Activated CD8-positive, alpha-beta T cell treated with anti-CD3 and anti-CD28 coated beads for 36 hours (primary cell): ENCODE measurements at regions of chr17 and their contacts with region 1.

Region 1: GRCh38 chr17:43878260-43879175 is 28.8 kb downstream of the MPP2 start:
- DNase-seq: peak; percentile 73
- ATAC-seq: peak; percentile 95
- H3K4me3 Mint-ChIP-seq: no peak overlapping the region
- H3K27ac Mint-ChIP-seq: no peak overlapping the region
- H3K4me1 Mint-ChIP-seq: no peaks in the 10 kb centered on the region
- H3K27me3 Mint-ChIP-seq: peaks cover under 1% of the 10 kb centered on the region
- CTCF ChIP-seq: peak; percentile 82

Region 2: GRCh38 chr17:43661699-43662412 is 216.7 kb before region 1 on chr17 and contains the start of gene MEOX1:
- CTCF ChIA-PET with region 1: no interaction called
- POLR2A ChIA-PET with region 1: no interaction called
- intact Hi-C with region 1: no loop called
- DNase-seq: peak; percentile 57
- ATAC-seq: peak; percentile 86
- H3K4me3 Mint-ChIP-seq: peak within 1 kb of the TSS; percentile 31
- H3K27ac Mint-ChIP-seq: peak within 1 kb of the TSS; percentile 39
- H3K4me1 Mint-ChIP-seq: peaks cover 25% of the 10 kb centered on the region
- H3K27me3 Mint-ChIP-seq: peaks cover 7% of the 10 kb centered on the region
- CTCF ChIP-seq: no peak
- total RNA-seq, gene MEOX1: 0.45 to 0.47 TPM

Region 3: DNA sequence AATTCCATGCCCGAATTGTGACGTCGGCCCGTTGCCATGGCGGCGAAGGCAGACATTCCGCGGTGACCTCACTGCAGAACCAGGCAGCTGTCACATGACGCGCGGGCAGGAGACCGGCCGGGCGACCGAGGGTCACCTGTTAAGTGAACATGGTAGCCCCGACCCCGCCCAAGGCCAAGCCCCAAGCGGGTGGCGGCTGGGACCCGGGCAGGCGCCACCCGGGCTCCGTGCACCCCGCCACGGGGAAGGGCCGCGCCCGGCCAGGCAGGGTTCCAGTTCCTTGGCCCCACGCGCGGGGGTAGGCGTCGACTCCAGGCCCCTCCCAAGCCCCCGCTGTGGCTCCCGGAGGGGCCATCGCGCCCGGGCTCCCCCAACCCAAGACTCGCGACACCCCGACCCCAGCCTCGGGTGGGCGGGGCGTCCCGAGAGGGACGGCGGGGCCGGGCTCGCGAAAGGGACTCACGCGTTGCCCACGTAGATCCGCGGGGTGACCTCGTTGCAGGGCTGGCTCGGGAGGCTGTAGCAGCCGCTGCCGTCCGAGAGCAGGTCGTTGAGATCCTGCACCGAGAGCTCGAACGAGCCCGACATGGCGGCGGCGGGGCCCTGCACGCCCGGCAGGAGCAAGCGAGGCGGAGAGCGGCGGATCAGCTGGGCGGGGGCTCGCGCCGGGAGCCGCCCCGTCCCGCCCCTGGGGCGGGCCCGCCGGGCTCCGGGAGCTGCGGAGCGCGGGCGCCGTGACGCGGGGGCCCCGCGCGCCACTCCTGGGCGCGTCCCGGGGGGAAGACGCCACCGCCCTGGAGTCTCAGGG is 100.0 kb before region 1 on chr17 and contains the start of gene DUSP3:
- CTCF ChIA-PET with region 1: no interaction called
- POLR2A ChIA-PET with region 1: no interaction called
- intact Hi-C with region 1: no loop called
- DNase-seq: peak; percentile 72
- ATAC-seq: peak; percentile 97
- H3K4me3 Mint-ChIP-seq: peak within 1 kb of the TSS; percentile 79
- H3K27ac Mint-ChIP-seq: peak within 1 kb of the TSS; percentile 78
- H3K4me1 Mint-ChIP-seq: peaks cover 10% of the 10 kb centered on the region
- H3K27me3 Mint-ChIP-seq: peaks cover 27% of the 10 kb centered on the region
- CTCF ChIP-seq: no peak
- total RNA-seq, gene DUSP3: 24.7 to 26.3 TPM

Region 4: DNA sequence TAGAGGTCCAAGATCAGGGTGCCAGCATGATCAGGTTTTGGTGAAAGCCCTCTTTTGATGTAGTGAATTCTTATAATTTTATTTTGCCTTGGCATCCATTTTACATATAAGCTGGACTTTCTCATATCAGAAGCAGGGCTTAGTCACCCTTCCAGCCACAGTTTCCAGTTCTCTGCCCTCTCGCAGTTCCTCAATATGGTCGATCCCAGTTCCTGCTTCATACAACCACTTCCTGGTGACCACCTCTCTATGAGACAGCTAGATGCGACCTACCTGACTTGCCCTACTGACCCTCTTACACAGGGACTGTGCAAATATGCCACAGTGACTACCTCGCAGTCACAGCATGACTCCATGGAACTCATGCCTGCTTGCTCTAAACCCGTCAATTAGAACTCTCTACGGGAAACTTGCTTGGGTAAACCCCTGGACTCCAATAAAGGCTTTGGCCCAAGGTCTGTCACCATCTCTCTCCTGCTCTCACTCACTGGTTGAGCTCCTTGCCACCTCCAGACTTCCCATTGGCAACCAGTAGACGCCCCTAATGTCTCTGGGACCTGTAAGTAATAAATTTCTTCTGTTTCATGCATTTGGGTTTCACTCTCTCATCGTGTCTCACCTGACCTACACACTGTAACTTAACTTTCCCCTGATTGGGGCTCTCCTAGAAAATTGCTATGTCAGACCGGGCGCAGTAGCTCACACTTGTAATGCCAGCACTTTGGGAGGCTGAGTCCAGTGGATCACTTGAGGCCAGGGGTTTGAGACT is 10.1 kb before region 1 on chr17:
- CTCF ChIA-PET with region 1: interaction called, 15 read pairs
- POLR2A ChIA-PET with region 1: no interaction called
- intact Hi-C with region 1: no loop called
- DNase-seq: no peak
- ATAC-seq: no peak
- H3K4me3 Mint-ChIP-seq: no peak overlapping the region
- H3K27ac Mint-ChIP-seq: no peak overlapping the region
- H3K4me1 Mint-ChIP-seq: no peaks in the 10 kb centered on the region
- H3K27me3 Mint-ChIP-seq: peaks cover 14% of the 10 kb centered on the region
- CTCF ChIP-seq: no peak

Region 5: GRCh38 chr17:43900183-43900857 is 21.8 kb after region 1 on chr17:
- CTCF ChIA-PET with region 1: interaction called, 78 read pairs
- POLR2A ChIA-PET with region 1: no interaction called
- intact Hi-C with region 1: no loop called
- DNase-seq: peak; percentile 92
- ATAC-seq: peak; percentile 100
- H3K4me3 Mint-ChIP-seq: peak overlapping the region; percentile 69
- H3K27ac Mint-ChIP-seq: no peak overlapping the region
- H3K4me1 Mint-ChIP-seq: peaks cover 9% of the 10 kb centered on the region
- H3K27me3 Mint-ChIP-seq: peaks cover 4% of the 10 kb centered on the region
- CTCF ChIP-seq: no peak

Region 6: DNA sequence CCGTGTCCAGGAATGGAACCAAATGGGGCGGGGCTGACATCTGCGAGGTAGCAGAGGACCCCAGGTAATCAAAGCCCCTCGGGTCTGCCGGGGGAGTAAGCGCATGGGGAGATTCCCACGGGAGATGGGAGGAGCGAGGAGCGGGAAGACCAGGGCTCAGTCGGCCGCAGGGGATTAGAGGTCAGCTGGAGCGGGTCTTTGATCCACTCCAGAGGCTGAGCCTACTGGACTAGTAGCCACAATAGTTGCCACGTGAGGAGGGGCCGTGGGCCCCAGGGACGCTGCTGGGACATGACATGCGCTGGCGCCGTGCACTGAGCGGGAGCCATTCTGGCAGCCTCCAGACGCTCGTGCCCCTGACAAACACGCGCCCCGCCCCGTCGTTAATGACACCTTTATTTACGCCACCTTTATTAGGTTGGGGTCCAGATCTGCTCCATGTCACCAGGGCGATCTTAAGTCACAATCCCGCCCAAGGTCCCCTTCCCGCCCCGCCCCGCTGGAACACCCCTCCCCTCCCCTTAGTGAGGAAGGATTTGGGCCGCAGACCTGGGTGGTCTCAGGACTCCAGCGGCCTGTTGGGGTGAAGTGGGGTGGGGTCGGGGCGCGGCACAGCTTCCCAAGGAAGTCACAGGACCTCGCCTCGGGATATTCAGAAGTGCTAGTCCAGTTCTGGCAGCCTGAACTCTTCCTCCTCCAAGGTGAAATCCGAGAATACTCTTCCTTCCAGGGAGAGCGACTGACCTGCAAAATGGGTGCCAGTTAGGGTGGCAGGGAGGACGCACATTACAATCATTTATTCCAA is 48.7 kb after region 1 on chr17:
- CTCF ChIA-PET with region 1: interaction called, 28 read pairs
- POLR2A ChIA-PET with region 1: no interaction called
- intact Hi-C with region 1: no loop called
- DNase-seq: peak; percentile 63
- ATAC-seq: peak; percentile 60
- H3K4me3 Mint-ChIP-seq: peak overlapping the region; percentile 70
- H3K27ac Mint-ChIP-seq: peak overlapping the region; percentile 69
- H3K4me1 Mint-ChIP-seq: peaks cover 26% of the 10 kb centered on the region
- H3K27me3 Mint-ChIP-seq: no peaks in the 10 kb centered on the region
- CTCF ChIP-seq: no peak

Region 7: DNA sequence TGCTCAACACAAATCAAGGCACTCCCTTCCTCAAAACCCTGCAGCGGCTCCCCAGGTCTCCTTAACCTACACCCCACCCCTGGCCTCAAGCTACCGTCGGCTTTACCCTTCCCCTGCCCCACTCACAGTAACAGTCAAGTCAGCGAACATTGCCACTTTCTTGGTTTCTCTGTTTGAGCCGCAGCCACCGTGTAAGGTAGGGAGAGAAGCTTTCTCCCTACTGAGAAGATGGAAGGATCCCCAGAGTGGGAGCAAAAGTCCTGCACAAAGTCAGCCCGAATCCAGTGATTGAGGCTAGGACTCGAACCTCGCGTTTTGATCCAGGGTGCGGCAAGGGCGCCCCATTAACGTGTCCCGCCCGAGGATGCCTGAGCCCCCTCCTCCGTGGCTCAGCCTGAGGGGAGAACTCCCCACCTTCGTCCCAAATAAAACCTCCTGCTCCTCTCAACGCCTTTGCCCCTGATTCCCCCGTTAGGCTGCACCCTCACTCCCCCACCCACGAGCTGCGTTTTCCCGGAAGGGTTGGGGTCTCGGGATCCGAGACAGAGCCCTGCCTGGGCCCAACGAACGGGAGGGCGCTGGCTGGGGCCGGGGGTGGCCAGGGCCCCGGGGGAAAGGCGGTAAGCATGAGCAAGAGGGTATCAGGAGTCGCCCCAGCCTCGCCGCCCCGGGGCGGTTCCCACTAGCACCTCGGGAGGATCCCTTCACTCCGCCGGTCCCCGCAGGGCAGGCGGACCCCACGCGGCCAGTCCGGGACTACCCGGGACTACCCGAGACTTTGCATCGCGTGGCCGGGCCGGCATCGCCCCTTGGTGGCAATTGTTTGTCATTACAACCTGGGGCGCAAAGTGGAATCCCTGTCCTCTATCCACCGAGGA is 116.0 kb after region 1 on chr17:
- CTCF ChIA-PET with region 1: interaction called, 40 read pairs
- POLR2A ChIA-PET with region 1: interaction called, 3 read pairs
- intact Hi-C with region 1: no loop called
- DNase-seq: peak; percentile 75
- ATAC-seq: peak; percentile 95
- H3K4me3 Mint-ChIP-seq: no peak overlapping the region
- H3K27ac Mint-ChIP-seq: no peak overlapping the region
- H3K4me1 Mint-ChIP-seq: no peaks in the 10 kb centered on the region
- H3K27me3 Mint-ChIP-seq: peaks cover 14% of the 10 kb centered on the region
- CTCF ChIP-seq: peak; percentile 95